Lower leg skin (tissue), 4 donors: ENCODE measurements at regions of chr1 and their contacts with region 1.

Region 1: GRCh38 chr1:42146626-42147320 is 6.4 kb upstream of the GUCA2B start:
- DNase-seq: peak; percentile 77 to 95
- H3K4me3 ChIP-seq: no peak overlapping the region
- CTCF ChIP-seq: peak in 1 of 3 donors; percentile 83
- POLR2A ChIP-seq: no peak

Region 2: DNA sequence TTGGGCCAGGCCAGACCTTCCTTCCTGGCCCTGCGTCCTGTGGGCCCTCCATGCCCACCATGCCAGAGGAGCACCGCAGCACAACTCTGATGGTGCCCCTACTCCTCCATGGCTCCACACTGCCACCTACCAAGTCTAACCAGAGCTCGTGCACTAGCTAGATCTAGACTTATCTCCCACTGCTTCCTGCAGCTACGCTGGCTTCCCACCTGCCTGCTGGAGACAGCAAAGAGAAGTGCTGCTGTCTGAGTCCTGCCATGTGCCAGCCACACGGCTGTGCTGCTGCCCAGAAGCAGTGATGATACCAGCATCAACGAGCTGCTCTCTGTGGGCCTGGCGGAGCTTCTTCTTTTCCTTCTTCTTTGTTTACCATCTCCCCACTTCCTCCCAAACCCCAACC is 10.9 kb after region 1 on chr1:
- intact Hi-C with region 1: no loop called
- DNase-seq: no peak
- H3K4me3 ChIP-seq: no peak overlapping the region
- CTCF ChIP-seq: no peak
- POLR2A ChIP-seq: no peak

Region 3: DNA sequence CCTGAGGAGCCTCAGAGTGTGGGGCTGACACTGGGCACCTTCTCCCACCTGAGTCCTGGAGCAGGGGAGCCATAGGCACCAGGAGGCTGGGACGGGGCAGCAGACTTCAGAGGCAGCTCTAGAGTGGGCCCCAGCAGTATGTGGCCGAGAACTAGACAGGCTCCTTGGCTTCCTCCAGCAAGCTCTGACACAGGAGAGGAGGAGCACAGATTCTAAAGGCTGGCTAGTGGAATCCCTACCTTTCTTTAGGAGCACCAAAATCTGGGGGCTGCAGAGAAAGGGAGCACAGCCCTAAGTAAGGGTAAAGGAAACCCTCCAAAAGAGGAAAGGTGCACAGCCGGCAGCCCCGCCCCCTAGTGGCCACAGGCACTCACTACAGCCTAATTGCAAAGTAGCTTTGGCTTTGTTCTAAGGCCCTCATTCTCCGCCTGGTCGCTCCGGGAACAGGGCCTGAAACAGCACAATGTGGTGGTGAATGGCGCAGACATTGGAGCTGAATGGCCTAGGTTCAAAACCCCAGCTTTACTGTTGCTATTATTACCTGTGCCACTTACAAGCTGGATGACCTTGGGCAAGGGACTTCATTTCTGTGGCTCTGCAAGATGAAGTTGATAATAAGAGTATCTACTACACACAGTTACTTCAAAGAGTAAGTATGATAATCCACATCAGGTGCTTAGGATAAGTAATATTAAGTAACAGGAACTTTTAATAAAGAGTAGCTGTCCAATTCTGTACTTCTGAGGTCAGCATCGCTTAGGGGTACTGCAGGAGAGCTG is 26.6 kb after region 1 on chr1:
- intact Hi-C with region 1: loop called (anchors 2 kb)
- DNase-seq: peak; percentile 40 to 94
- H3K4me3 ChIP-seq: no peak overlapping the region
- CTCF ChIP-seq: peak in 2 of 3 donors; percentile 22 to 86
- POLR2A ChIP-seq: no peak